Activated T-helper 1 cell treated with anti-CD3 and anti-CD28 coated beads, Interleukin-12 subunit alpha, Interleukin-12 subunit beta, Interleukin-2, Interleukin-4 antibody, amounts not matched to agents 30 ng/mL and 10 ng/mL and 1 ng/mL, durations not matched to agents 14 hours and 24 hours and 36 hours (primary cell): ENCODE measurements at regions of chr5 and their contacts with region 1.

Region 1: GRCh38 chr5:43484106-43484849 is 613 bp upstream of the TMEM267 start:
- DNase-seq: peak; percentile 82
- H3K4me3 Mint-ChIP-seq: peak overlapping the region; percentile 97
- H3K27ac Mint-ChIP-seq: peak overlapping the region; percentile 100
- H3K4me1 Mint-ChIP-seq: peaks cover 34% of the 10 kb centered on the region
- H3K27me3 Mint-ChIP-seq: no peaks in the 10 kb centered on the region

Region 2: GRCh38 chr5:41924872-41925554 is 1559.3 kb before region 1 on chr5 and contains the start of gene FBXO4:
- intact Hi-C with region 1: loop called (anchors 10 kb)
- DNase-seq: peak; percentile 87
- H3K4me3 Mint-ChIP-seq: peak within 1 kb of the TSS; percentile 91
- H3K27ac Mint-ChIP-seq: peak within 1 kb of the TSS; percentile 98
- H3K4me1 Mint-ChIP-seq: peaks cover 13% of the 10 kb centered on the region
- H3K27me3 Mint-ChIP-seq: no peaks in the 10 kb centered on the region
- total RNA-seq, gene FBXO4: 14.1 and 17.8 TPM in 2 replicates

Region 3: DNA sequence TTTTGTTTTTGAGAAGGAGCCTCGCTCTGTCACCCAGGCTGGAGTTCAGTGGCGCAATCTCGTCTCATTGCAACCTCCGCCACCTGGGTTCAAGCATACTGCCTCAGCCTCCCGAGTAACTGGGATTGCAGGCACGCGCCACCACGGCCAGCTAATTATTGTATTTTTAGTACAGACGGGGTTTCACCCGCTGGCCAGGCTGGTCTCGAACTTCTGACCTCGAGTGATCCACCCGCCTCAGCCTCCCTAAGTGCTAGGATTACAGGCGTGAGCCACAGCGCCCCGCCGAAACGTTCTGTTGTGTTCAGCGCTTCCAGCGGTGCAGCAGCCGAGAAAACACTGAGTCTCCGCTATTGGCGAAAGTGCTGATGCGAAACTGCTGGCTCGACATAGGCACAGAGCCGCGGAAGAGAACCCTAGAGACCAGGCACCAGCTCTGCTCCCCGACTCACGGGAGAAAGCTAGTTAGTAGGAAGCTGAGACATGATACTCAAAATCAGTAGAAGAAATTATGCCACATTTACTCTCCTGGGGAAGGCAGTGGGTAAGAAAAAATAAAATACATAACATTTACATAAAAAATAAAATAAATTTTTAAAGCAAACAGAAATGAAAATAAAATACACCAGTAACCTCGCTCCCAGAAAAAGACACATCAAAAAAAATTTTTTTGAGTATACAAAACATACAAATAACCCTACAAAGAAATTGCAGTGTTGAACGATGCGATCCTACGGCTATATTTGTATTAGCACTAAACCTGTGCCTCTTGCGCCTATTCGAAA is 475.7 kb before region 1 on chr5:
- intact Hi-C with region 1: loop called (anchors 5 kb)
- DNase-seq: peak; percentile 86
- H3K4me3 Mint-ChIP-seq: peak overlapping the region; percentile 90
- H3K27ac Mint-ChIP-seq: peak overlapping the region; percentile 96
- H3K4me1 Mint-ChIP-seq: peaks cover 41% of the 10 kb centered on the region
- H3K27me3 Mint-ChIP-seq: no peaks in the 10 kb centered on the region

Region 4: DNA sequence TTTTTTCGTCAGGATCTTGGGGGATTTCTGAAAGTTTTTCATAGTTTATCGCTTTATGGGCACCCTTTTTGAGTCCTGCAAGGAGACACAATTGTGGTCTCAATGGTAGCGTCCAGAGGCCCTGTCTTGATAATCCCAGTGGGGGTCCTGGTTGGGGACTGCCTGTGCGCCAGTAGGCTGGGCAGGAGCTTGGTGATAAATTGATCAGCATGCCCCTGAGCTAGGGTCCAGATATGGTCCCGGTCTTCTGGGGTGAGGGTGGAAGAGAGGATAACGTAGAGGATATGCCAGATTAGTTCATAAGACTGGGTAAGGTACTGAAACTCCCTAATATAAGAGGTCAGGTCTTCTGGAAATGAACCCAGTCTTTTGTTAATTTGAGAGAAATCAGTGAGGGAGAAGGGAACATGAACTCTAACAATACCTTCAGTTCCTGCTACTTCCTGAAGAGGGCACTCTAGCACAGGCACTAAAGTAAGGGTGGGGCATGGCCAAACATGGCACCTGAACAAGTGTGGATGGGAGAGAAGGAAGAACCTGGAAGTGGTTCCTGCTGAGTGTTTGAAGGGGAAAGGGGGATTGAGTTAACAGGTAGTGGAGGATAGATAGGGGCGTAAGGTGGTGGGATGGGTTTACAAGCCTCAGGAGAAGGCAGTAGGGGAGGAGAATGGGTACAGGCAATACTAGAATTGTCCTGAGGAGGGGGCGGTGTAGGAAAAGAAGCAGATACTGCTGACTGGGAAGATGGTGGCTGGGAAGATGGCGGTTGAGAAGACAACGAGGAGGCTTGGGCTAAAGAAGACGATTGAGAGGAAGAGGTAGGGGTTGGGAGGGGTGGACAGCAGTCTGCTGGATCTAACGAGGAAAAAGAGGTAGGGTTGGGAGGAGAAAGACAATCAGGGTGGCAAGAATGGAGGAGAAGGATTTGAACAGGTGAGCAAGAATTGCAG is 410.4 kb before region 1 on chr5:
- intact Hi-C with region 1: loop called (anchors 2 kb)
- DNase-seq: peak; percentile 42
- H3K4me3 Mint-ChIP-seq: no peak overlapping the region
- H3K27ac Mint-ChIP-seq: peak overlapping the region; percentile 41
- H3K4me1 Mint-ChIP-seq: peaks cover 45% of the 10 kb centered on the region
- H3K27me3 Mint-ChIP-seq: no peaks in the 10 kb centered on the region

Region 5: GRCh38 chr5:43191740-43192557 is 292.3 kb before region 1 on chr5 and contains the start of gene NIM1K:
- intact Hi-C with region 1: loop called (anchors 2 kb)
- DNase-seq: peak; percentile 39
- H3K4me3 Mint-ChIP-seq: peak within 1 kb of the TSS; percentile 85
- H3K27ac Mint-ChIP-seq: peak within 1 kb of the TSS; percentile 89
- H3K4me1 Mint-ChIP-seq: peaks cover 40% of the 10 kb centered on the region
- H3K27me3 Mint-ChIP-seq: peaks cover 22% of the 10 kb centered on the region
- total RNA-seq, gene NIM1K: 0.39 and 0.67 TPM in 2 replicates

Region 6: GRCh38 chr5:43389679-43390329 is 94.5 kb before region 1 on chr5:
- intact Hi-C with region 1: loop called (anchors 1 kb)
- DNase-seq: peak; percentile 22
- H3K4me3 Mint-ChIP-seq: no peak overlapping the region
- H3K27ac Mint-ChIP-seq: no peak overlapping the region
- H3K4me1 Mint-ChIP-seq: peaks cover 19% of the 10 kb centered on the region
- H3K27me3 Mint-ChIP-seq: no peaks in the 10 kb centered on the region

Region 7: GRCh38 chr5:43453606-43454005 is 30.7 kb before region 1 on chr5:
- intact Hi-C with region 1: no loop called
- DNase-seq: no peak
- H3K4me3 Mint-ChIP-seq: no peak overlapping the region
- H3K27ac Mint-ChIP-seq: no peak overlapping the region
- H3K4me1 Mint-ChIP-seq: no peaks in the 10 kb centered on the region
- H3K27me3 Mint-ChIP-seq: no peaks in the 10 kb centered on the region

Region 8: DNA sequence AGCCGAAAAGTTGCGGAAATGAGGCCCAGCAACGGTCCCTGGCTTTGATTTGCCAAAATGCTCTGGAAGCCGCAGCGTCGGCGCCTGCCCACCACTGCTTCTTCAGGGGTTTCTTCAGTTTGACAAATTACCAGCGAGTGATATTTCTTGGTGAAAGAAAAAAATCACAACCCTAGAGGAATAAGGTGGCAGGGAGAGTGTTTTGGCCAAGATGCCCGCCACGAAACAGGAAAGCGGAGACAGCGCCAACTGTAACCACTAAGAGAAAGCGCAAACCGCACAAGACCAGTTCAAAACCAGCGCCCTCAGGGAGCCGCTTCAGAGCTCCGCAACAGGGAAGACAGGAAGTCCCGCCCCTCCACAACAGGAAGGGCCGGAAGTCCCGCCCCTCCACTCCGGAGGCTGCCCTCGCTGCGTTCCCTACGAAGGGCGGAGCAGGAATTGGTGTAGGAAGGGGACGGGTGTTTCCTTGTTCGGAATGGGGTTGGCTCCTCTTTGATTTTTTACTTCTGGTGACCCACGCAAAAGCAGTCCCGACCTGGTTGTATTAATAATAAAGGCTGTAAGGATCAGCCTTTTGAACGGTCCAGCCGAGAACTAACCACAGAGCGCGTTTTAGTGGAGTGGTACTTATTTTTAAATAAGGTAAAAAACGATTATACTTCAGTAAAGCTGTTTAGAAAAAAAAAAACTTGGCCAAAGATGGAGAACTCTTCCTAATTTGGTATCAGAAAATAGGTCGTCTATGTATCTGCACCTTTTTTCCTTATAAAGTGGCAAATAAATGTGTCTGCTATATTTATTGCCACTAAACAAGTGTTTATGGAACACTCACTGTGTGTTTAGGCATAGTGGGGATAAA is 30.8 kb after region 1 on chr5 and contains the start of gene C5orf34:
- intact Hi-C with region 1: loop called (anchors 1 kb)
- DNase-seq: peak; percentile 92
- H3K4me3 Mint-ChIP-seq: peak within 1 kb of the TSS; percentile 94
- H3K27ac Mint-ChIP-seq: peak within 1 kb of the TSS; percentile 97
- H3K4me1 Mint-ChIP-seq: peaks cover 32% of the 10 kb centered on the region
- H3K27me3 Mint-ChIP-seq: peaks cover 2% of the 10 kb centered on the region
- total RNA-seq, gene C5orf34: 5.3 and 5.5 TPM in 2 replicates